CD8-positive, alpha-beta T cell (primary cell): ENCODE measurements at regions of chr17 and their contacts with region 1.

Region 1: GRCh38 chr17:50541716-50542688 is 5.0 kb upstream of the SPATA20 start:
- DNase-seq: peak; percentile 52 to 89 (median 82)
- ATAC-seq: peak; percentile 86
- H3K4me3 ChIP-seq: peak overlapping the region; percentile 69 to 74
- H3K4me3 Mint-ChIP-seq: peak overlapping the region; percentile 83
- H3K27ac ChIP-seq: peak overlapping the region in 1 of 2 experiments; percentile 29
- H3K27ac Mint-ChIP-seq: peak overlapping the region; percentile 70
- H3K4me1 ChIP-seq: peaks cover 20% of the 10 kb centered on the region
- H3K4me1 Mint-ChIP-seq: peaks cover 17% of the 10 kb centered on the region
- H3K27me3 ChIP-seq: no peaks in the 10 kb centered on the region
- H3K27me3 Mint-ChIP-seq: peaks cover 6% of the 10 kb centered on the region
- CTCF ChIP-seq: peak; percentile 32

Region 2: DNA sequence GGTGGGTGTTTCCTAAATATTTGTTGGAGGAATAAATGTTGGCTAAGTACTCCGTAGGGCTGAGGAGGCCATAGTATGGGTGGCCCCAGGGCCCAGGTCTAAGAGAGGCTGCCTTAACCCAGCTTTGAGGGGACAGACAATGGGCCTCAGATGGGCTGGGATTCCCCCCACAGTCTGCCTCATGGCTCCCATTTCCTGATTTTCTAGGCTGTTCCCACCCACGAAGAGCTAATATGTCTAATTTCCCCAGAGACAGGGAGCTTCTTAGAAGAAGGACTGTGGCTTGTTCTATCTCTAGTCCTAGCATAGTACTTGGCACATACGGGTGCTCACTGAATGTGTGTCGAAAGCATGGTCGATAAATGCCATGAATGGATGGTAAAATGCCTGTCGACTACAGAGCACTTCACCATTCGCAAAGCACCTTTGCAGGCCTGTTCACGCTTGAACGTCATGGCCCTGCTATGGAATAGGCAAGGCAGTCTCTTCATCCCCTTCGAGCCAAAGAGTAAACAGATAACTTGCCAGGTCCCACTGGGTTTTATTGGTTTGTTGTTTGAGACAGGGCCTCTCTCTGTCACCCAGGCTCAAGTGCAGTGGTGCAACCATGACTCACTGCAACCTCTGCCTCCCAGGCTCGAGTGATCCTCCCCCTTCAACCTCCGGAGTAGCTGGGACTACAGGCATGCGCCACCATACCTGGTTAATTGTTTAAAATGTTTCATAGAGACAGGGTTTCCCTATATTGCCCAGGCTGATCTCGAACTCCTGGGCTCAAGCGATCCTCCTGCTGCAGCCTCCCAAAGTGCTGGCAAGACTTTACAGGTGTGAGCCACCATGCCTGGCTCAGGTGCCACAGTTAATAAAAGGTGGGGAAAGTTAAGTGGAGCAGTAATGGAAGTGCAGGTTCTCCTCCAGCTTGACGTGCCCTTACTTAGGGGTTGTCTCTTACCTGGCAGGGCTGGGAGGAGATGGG is 83.0 kb before region 1 on chr17:
- CTCF ChIA-PET with region 1: no interaction called
- POLR2A ChIA-PET with region 1: no interaction called
- intact Hi-C with region 1: no loop called
- DNase-seq: no peak
- ATAC-seq: no peak
- H3K4me3 ChIP-seq: no peak overlapping the region
- H3K4me3 Mint-ChIP-seq: no peak overlapping the region
- H3K27ac ChIP-seq: no peak overlapping the region
- H3K27ac Mint-ChIP-seq: no peak overlapping the region
- H3K4me1 ChIP-seq: no peaks in the 10 kb centered on the region
- H3K4me1 Mint-ChIP-seq: no peaks in the 10 kb centered on the region
- H3K27me3 ChIP-seq: no peaks in the 10 kb centered on the region
- H3K27me3 Mint-ChIP-seq: no peaks in the 10 kb centered on the region
- CTCF ChIP-seq: no peak

Region 3: GRCh38 chr17:50495918-50496317 is 46.1 kb before region 1 on chr17:
- CTCF ChIA-PET with region 1: no interaction called
- POLR2A ChIA-PET with region 1: no interaction called
- intact Hi-C with region 1: no loop called
- DNase-seq: no peak
- ATAC-seq: no peak
- H3K4me3 ChIP-seq: no peak overlapping the region
- H3K4me3 Mint-ChIP-seq: no peak overlapping the region
- H3K27ac ChIP-seq: no peak overlapping the region
- H3K27ac Mint-ChIP-seq: no peak overlapping the region
- H3K4me1 ChIP-seq: no peaks in the 10 kb centered on the region
- H3K4me1 Mint-ChIP-seq: no peaks in the 10 kb centered on the region
- H3K27me3 ChIP-seq: no peaks in the 10 kb centered on the region
- H3K27me3 Mint-ChIP-seq: no peaks in the 10 kb centered on the region
- CTCF ChIP-seq: no peak

Region 4: GRCh38 chr17:50507871-50508572 is 34.0 kb before region 1 on chr17 and contains the start of gene MYCBPAP:
- CTCF ChIA-PET with region 1: no interaction called
- POLR2A ChIA-PET with region 1: no interaction called
- intact Hi-C with region 1: loop called in 1 of 2 experiments (anchors 1 kb)
- DNase-seq: peak; percentile 68 to 91 (median 76)
- ATAC-seq: peak; percentile 73
- H3K4me3 ChIP-seq: peak within 1 kb of the TSS; percentile 68 to 77
- H3K4me3 Mint-ChIP-seq: peak within 1 kb of the TSS; percentile 95
- H3K27ac ChIP-seq: peak within 1 kb of the TSS; percentile 50 to 56
- H3K27ac Mint-ChIP-seq: peak within 1 kb of the TSS; percentile 94
- H3K4me1 ChIP-seq: peaks cover 22% of the 10 kb centered on the region
- H3K4me1 Mint-ChIP-seq: peaks cover 43% of the 10 kb centered on the region
- H3K27me3 ChIP-seq: no peaks in the 10 kb centered on the region
- H3K27me3 Mint-ChIP-seq: no peaks in the 10 kb centered on the region
- CTCF ChIP-seq: no peak
- total RNA-seq, gene MYCBPAP: 3.4 to 3.5 TPM

Region 5: DNA sequence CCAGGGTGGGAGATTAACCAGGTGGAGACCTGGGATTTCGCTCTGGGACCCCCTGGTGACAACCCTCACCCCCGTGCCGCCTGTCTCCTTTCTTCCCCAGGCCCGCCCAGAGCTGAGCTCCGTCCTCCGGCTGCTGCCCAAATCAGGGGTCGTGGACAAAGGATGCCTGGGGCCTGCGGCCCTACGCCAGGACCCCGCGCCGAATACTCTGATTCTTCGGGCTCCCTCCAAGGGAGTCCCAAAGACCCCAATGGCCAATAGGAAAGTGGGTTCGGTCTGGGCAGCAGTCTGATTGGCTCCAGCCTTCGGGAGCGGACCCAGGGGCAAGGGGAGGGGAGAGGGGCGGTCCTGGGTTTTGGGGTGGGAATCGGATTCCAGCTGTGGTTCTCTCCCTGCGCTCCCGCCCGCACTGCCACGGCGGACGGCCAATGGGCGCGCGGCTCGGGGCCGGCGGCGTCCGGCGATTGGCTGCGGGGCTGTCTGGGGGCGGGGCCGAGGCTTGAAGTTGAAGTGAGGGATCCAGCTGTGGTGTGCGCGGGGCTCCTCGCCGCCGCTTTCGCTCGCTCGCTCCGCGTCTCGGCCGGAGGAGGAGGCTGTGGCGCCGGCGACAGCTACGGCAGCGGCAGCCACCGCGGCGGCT is 18.3 kb after region 1 on chr17 and contains the start of gene CACNA1G:
- CTCF ChIA-PET with region 1: interaction called, 5 read pairs
- POLR2A ChIA-PET with region 1: interaction called, 5 read pairs
- intact Hi-C with region 1: loop called in 1 of 2 experiments (anchors 1 kb)
- DNase-seq: peak; percentile 74 to 91 (median 85)
- ATAC-seq: peak; percentile 84
- H3K4me3 ChIP-seq: peak within 1 kb of the TSS; percentile 47 to 54
- H3K4me3 Mint-ChIP-seq: peak within 1 kb of the TSS; percentile 78
- H3K27ac ChIP-seq: no peak within 1 kb of the TSS
- H3K27ac Mint-ChIP-seq: no peak within 1 kb of the TSS
- H3K4me1 ChIP-seq: peaks cover 29% of the 10 kb centered on the region
- H3K4me1 Mint-ChIP-seq: peaks cover 32% of the 10 kb centered on the region
- H3K27me3 ChIP-seq: peaks cover 29 to 41% of the 10 kb centered on the region in 2 experiments
- H3K27me3 Mint-ChIP-seq: peaks cover 48% of the 10 kb centered on the region
- CTCF ChIP-seq: no peak
- total RNA-seq, gene CACNA1G: 0.03 TPM in 1 of 2 experiments, not detected in the other